ENCODE measurements at regions of chr2 and their contacts with region 1.

Region 1: GRCh38 chr2:177263451-177264208 is 897 bp downstream of the NFE2L2 start:
- DNase-seq: peak; percentile 89
- H3K4me3 ChIP-seq: peak overlapping the region; percentile 71 to 93
- H3K27ac ChIP-seq: peak overlapping the region; percentile 97
- H3K4me1 ChIP-seq: peaks cover 17 to 22% of the 10 kb centered on the region in 2 experiments
- H3K27me3 ChIP-seq: no peaks in the 10 kb centered on the region
- CTCF ChIP-seq: peak; percentile 79
- EP300 ChIP-seq: no peak
- RAD21 ChIP-seq: peak; percentile 66

Region 2: DNA sequence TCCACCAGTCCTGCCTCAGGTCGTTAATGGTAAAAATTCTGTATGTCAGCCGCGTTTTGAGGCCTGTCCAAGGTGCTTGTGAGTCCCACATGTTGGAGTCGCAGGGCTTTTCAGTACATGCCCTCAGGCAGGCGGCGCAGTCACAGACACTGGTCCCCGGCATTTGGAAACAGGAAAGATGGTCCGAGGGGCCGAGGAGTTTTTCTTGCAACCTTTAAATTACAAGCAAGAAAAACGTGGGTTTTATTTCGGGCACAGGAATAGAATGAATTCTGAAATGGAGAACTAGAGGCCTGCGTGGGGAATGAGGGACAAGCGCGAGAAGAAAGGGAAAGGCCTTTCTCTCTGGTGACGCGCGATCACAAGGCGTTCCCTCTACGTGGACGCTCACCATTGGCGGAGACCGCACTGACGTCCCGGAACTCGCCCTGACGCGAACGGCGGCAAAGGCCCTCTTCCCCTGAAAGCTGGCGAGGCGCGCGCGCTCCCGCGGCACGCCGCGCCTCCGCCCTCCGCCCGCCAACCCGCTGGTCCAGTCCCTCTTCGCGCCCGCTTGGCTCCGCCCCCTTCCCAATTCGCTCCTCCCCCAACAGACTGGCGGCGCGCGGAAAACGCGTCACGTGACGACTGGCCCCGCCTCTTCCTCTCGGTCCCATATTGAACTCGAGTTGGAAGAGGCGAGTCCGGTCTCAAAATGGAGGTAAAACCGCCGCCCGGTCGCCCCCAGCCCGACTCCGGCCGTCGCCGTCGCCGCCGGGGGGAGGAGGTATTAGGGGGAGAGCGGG is 51.3 kb before region 1 on chr2 and contains the start of gene HNRNPA3:
- CTCF ChIA-PET with region 1: interaction called, 4 read pairs
- POLR2A ChIA-PET with region 1: interaction called, 28 read pairs
- DNase-seq: peak; percentile 98
- H3K4me3 ChIP-seq: peak within 1 kb of the TSS; percentile 72 to 88
- H3K27ac ChIP-seq: peak within 1 kb of the TSS; percentile 97 to 99
- H3K4me1 ChIP-seq: peaks cover 0 to 23% of the 10 kb centered on the region in 2 experiments; a peak in 3 of 4 replicates
- H3K27me3 ChIP-seq: no peaks in the 10 kb centered on the region
- CTCF ChIP-seq: peak; percentile 41
- EP300 ChIP-seq: no peak
- RAD21 ChIP-seq: no peak
- polyA plus RNA-seq, gene HNRNPA3: 86.5 and 102 TPM in 2 replicates

Region 3: GRCh38 chr2:177239932-177240630 is 23.5 kb before region 1 on chr2:
- CTCF ChIA-PET with region 1: interaction called, 21 read pairs
- POLR2A ChIA-PET with region 1: no interaction called
- DNase-seq: no peak
- H3K4me3 ChIP-seq: peak overlapping the region in 1 of 2 experiments; percentile 5; a peak in 1 of 4 replicates
- H3K27ac ChIP-seq: peak overlapping the region; percentile 94 to 98
- H3K4me1 ChIP-seq: peaks cover 43 to 49% of the 10 kb centered on the region in 2 experiments
- H3K27me3 ChIP-seq: no peaks in the 10 kb centered on the region
- CTCF ChIP-seq: no peak
- EP300 ChIP-seq: no peak
- RAD21 ChIP-seq: no peak

Region 4: DNA sequence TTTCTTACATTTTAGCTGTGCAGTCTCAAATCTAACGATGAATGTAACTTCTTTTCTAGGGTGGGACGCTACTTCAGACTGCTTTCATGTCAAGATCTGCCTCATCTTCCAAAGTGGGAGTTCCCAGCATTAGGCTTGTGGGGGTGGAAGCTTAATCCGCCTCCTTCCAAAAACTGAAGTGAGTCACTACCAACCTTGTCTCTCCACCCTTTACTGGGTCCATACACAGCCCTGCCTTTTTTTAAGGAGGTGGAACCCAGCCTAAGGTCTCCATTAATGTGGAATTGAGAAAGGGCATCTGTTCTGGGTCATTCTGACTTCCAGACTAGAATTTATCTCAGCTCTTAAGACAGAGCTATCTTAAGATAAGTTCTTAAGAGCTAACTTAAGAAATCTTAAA is 42.9 kb after region 1 on chr2:
- CTCF ChIA-PET with region 1: interaction called, 13 read pairs
- POLR2A ChIA-PET with region 1: no interaction called
- DNase-seq: no peak
- H3K4me3 ChIP-seq: no peak overlapping the region
- H3K27ac ChIP-seq: no peak overlapping the region
- H3K4me1 ChIP-seq: no peaks in the 10 kb centered on the region
- H3K27me3 ChIP-seq: no peaks in the 10 kb centered on the region
- CTCF ChIP-seq: no peak
- EP300 ChIP-seq: no peak
- RAD21 ChIP-seq: no peak

Region 5: DNA sequence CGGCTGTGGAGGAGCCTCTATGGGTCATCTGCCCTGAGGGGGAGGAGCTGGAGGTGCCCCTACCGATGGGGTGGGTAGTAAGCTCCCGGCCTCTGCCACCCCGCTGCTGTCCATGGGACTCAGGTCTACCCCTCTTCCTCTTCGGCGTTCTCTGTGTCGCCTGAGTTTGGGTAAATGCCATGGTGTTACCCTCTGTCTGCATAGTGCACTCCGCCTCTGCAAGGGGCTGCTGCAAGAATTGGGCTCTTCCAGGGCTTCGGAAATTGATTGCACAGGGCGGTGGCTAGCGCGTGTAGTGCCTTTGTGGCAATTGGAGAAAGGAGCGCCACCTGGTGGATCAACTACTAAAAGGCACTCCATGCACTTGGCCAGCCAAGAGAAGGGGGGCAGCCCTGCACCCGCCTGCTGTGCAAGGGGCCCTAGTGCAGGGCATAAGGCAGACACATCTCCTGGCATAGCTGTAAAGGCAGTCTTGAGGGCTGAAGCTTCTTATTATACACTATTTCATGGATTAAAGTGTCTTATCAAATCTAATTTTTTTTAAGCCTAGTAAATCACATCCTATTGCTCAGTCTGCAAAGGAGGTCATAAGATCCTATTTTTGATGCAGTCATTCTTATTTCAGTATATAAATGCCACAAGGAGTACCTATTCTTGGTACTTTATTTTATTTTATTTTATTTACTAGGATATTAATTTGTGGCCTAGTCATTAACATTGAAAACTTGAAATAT is 500.1 kb after region 1 on chr2:
- CTCF ChIA-PET with region 1: interaction called, 13 read pairs
- POLR2A ChIA-PET with region 1: no interaction called
- DNase-seq: peak; percentile 67
- H3K4me3 ChIP-seq: no peak overlapping the region
- H3K27ac ChIP-seq: no peak overlapping the region
- H3K4me1 ChIP-seq: peaks cover 0 to 4% of the 10 kb centered on the region in 2 experiments; a peak in 1 of 4 replicates
- H3K27me3 ChIP-seq: no peaks in the 10 kb centered on the region
- CTCF ChIP-seq: peak; percentile 78
- EP300 ChIP-seq: no peak
- RAD21 ChIP-seq: peak; percentile 54